ENCODE measurements at regions of chr5 and their contacts with region 1.

Region 1: GRCh38 chr5:78467752-78468357 is 107.4 kb downstream of the SCAMP1 start:
- DNase-seq: no peak
- H3K4me3 ChIP-seq: no peak overlapping the region
- CTCF ChIP-seq: peak; percentile 43

Region 2: GRCh38 chr5:78109891-78110324 is 357.9 kb before region 1 on chr5:
- CTCF ChIA-PET with region 1: no interaction called
- POLR2A ChIA-PET with region 1: no interaction called
- DNase-seq: no peak
- H3K4me3 ChIP-seq: no peak overlapping the region
- CTCF ChIP-seq: no peak

Region 3: GRCh38 chr5:78190402-78190801 is 277.5 kb before region 1 on chr5:
- CTCF ChIA-PET with region 1: no interaction called
- POLR2A ChIA-PET with region 1: no interaction called
- DNase-seq: no peak
- H3K4me3 ChIP-seq: no peak overlapping the region
- CTCF ChIP-seq: no peak

Region 4: GRCh38 chr5:78294248-78295034 is 173.4 kb before region 1 on chr5 and contains the start of gene AP3B1:
- CTCF ChIA-PET with region 1: no interaction called
- POLR2A ChIA-PET with region 1: no interaction called
- DNase-seq: peak; percentile 86
- H3K4me3 ChIP-seq: peak within 1 kb of the TSS; percentile 98
- CTCF ChIP-seq: no peak

Region 5: GRCh38 chr5:78483809-78484521 is 16.1 kb after region 1 on chr5:
- CTCF ChIA-PET with region 1: interaction called, 27 read pairs
- POLR2A ChIA-PET with region 1: no interaction called
- DNase-seq: peak; percentile 28
- H3K4me3 ChIP-seq: no peak overlapping the region
- CTCF ChIP-seq: no peak

Region 6: DNA sequence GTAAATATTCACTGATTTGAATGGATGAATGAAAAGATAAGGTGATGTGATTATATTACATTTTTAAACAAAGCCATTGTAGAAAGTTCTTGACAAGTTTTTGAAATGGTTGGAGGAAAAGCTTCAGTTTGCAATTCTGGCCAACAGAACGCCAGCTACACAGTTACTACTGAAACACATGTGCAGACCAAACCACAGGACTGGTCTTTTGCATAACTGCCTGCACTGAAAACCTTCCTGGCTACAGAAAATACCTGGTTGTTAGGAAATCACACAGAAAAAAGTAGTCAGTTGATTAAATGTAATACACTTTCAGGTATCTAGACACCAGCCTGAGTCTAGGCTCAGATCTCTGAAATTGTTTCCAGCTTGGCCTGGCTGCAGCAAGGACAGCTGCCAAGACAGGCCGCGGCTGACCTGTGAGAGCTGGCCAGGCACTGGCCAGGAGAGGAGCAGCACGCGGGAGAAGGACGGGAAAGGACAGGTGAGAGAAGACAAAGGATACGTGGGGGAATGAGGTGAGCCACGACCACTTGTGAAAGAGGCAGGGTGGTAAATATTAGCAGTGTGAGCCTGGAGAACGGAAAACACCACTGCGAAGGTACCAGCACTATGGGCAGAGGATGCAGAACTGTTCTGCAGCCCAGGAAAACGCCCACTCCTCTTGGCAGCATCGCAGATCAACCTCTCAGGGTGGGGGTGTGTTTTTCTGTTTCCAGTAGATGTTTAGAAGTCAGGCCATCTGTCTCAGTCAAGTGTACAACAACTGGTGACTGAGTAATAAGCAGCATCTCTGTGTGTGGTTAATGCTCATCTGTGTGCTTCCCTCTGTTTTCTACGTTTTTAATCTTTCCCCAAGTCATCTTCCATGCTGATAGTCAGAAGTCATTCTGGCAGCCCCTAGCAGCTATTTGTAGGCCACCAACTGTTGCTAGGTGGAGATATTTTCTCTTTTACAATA is 30.0 kb after region 1 on chr5:
- CTCF ChIA-PET with region 1: interaction called, 11 read pairs
- POLR2A ChIA-PET with region 1: no interaction called
- DNase-seq: no peak
- H3K4me3 ChIP-seq: no peak overlapping the region
- CTCF ChIP-seq: no peak